MCF 10A (cell line): ENCODE measurements at regions of chr7 and their contacts with region 1.

Region 1: DNA sequence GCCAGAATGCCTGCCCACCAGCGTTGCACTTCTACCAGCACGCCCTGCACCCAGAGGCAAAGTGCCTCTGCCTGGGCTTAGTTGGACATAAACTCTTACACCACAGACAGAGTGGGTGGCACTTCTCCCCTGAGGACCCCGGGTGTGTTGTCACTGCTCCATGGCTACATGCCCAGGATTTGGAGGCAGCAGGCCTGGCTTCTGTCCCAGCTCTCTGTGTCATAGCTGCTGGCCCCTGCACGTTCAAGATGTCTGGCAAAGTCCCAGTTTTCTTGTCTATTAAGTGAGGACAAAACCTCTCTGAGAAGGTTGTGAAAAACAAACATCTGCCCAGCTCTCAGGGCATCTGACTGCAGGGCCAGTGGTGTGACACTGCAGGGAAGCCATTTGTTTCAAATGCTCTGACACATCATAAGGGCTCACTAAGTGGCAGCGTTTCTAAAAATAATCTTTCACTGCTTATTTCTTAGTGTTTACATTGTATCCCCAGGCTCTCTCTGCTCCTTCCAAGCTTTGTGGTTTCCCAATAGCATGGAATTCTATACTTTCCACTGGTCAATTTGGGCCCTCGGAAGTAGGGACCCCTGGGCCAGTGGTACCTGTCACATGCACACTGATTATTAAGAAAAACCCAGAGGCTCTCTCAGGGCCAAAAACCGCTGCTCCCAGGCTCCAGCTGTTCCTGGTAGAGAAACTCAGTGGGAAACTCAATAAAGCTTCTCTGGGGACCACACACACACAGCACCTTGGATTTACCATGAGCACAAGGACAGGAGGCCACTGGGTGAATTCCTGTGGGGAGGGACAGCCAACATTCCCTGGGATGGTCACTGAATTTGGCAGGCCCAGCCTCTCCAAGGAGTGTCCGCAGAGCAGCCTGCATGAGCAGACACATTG is 86.2 kb upstream of the ANLN start:
- DNase-seq: peak; percentile 99
- H3K4me3 Mint-ChIP-seq: peak overlapping the region; percentile 47
- H3K27ac Mint-ChIP-seq: peak overlapping the region; percentile 39
- H3K4me1 Mint-ChIP-seq: peaks cover 20% of the 10 kb centered on the region
- H3K27me3 Mint-ChIP-seq: no peaks in the 10 kb centered on the region
- CTCF ChIP-seq: no peak

Region 2: DNA sequence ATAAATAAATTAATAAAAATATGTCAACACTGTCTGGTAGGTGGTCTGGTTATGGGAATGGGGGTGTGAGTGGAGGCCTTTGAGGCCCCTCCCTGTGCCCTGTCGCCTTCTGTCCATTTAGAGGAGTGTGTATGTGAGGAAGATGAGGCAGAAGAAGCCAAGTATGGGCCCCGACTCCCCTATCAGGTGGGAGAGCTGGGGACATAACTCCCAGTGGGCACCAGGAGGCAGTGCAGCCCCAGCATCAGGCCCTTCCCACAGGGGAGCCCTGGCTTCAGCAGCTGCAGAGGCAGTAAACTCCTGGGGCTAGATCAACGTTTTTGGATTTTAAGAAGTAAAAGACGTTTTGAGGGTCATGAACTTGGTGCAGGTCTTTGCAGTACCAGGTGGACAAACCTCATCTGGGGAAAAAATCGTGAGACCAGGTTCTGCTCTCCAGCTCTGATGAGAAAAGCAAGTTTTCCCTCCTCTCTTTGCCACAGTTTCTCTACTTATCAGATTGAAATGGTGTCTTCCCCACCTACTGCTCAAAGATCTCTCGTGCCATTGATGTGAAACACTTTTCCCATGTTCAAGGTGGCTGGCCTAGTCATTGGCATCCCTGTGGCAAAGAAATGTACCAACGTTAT is 318.2 kb before region 1 on chr7:
- CTCF ChIA-PET with region 1: interaction called, 21 read pairs
- POLR2A ChIA-PET with region 1: no interaction called
- intact Hi-C with region 1: no loop called
- DNase-seq: peak; percentile 71
- H3K4me3 Mint-ChIP-seq: no peak overlapping the region
- H3K27ac Mint-ChIP-seq: no peak overlapping the region
- H3K4me1 Mint-ChIP-seq: no peaks in the 10 kb centered on the region
- H3K27me3 Mint-ChIP-seq: no peaks in the 10 kb centered on the region
- CTCF ChIP-seq: peak; percentile 94

Region 3: GRCh38 chr7:36318116-36318515 is 14.7 kb after region 1 on chr7:
- CTCF ChIA-PET with region 1: interaction called, 69 read pairs
- POLR2A ChIA-PET with region 1: no interaction called
- intact Hi-C with region 1: no loop called
- DNase-seq: no peak
- H3K4me3 Mint-ChIP-seq: no peak overlapping the region
- H3K27ac Mint-ChIP-seq: no peak overlapping the region
- H3K4me1 Mint-ChIP-seq: peaks cover 5% of the 10 kb centered on the region
- H3K27me3 Mint-ChIP-seq: no peaks in the 10 kb centered on the region
- CTCF ChIP-seq: no peak

Region 4: GRCh38 chr7:36366718-36367560 is 63.5 kb after region 1 on chr7:
- CTCF ChIA-PET with region 1: interaction called, 11 read pairs
- POLR2A ChIA-PET with region 1: interaction called, 3 read pairs
- intact Hi-C with region 1: no loop called
- DNase-seq: peak; percentile 87
- H3K4me3 Mint-ChIP-seq: peak overlapping the region; percentile 80
- H3K27ac Mint-ChIP-seq: peak overlapping the region; percentile 70
- H3K4me1 Mint-ChIP-seq: no peaks in the 10 kb centered on the region
- H3K27me3 Mint-ChIP-seq: no peaks in the 10 kb centered on the region
- CTCF ChIP-seq: peak; percentile 83